Aorta (tissue), 5 donors: ENCODE measurements at regions of chr22 and their contacts with region 1.

Region 1: DNA sequence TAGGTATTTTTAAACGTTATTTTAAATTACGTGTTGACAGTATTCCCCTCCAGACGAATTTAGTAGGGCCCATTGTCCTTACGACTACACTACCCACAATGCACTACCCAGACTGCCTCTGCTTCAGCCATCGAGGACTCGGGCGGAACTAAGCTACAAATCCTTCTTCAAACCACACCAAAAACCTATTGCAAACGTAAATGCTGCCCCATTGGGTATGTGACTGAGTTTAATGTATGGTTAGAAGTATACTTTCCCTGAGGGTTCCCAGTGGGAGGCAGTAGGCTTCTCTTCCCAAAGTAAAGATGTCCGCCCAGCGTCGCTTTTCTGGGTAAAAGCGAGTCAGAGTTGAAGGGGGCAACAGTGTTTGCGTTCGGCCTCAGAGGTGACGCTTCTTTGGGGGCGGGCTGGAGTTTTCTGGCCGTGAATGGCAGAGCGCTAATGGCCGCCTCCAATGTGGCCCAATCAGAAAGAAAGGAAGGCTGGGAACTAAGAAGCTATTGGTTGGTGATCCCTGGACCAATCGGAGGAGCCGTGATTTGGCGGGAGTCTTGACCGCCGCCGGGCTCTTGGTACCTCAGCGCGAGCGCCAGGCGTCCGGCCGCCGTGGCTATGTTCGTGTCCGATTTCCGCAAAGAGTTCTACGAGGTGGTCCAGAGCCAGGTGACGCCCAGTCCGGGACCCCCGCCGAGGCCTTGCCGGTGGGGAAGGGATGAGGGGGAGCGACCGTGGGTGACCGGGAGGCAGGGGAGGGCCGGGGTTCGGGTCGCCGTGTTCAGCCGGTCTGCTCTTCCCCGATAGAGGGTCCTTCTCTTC is at the start of gene CDC45:
- DNase-seq: peak; percentile 97 to 98
- ATAC-seq: peak; percentile 98
- H3K4me3 ChIP-seq: peak within 1 kb of the TSS; percentile 47 to 71
- H3K27ac ChIP-seq: peak within 1 kb of the TSS; percentile 91 to 99
- H3K4me1 ChIP-seq: no peaks in the 10 kb centered on the region
- H3K27me3 ChIP-seq: no peaks in the 10 kb centered on the region
- total RNA-seq, gene CDC45: 0.68 to 1.0 TPM

Region 2: DNA sequence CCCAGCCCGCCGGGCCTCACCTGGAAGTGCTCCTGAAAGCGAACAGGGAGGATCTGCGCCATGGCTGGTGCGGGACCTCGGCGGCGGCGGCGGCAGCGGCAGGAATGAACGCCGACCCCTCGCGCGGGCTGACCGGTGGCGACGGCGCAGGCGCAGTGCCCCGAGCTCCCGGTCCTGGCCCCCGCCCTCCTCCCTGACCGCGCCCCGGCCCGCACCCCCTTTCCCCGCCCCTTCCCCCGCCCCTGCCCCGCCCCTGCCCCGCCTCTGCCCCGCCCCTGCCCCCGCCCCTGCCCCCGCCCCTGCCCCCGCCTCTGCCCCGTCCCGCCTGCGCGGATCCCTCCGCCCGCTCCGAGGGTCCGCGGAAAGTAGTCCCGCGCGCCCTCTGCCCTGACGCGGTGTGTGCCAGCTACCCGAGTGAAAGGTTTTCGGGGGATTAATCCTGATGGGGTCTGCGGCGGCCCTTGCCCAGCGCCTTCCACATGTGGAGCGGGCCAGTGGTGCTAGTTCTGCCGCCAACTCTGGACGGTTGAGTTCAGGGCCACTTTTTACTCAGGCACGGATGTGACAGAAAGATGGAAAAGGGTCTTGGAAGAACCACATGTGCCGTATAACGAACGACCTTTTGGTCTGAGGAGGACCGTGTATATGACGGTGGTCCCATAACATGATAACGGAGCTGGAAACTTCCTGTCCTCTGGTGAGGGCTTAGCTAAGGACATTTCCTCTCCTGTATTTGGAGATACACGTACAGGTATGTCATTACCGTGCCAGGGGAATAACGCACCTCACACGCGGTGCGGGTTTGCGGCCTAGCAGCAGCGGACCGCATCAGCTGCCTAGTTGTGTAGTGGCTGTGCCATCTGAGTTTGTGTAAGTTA is 187.7 kb before region 1 on chr22 and contains the start of gene CLTCL1:
- intact Hi-C with region 1: loop called in 1 of 2 experiments (anchors 10 kb)
- DNase-seq: peak; percentile 85 to 94
- ATAC-seq: peak; percentile 89
- H3K4me3 ChIP-seq: peak within 1 kb of the TSS; percentile 80 to 97
- H3K27ac ChIP-seq: peak within 1 kb of the TSS in 1 of 2 donors; percentile 23
- H3K4me1 ChIP-seq: no peaks in the 10 kb centered on the region
- H3K27me3 ChIP-seq: no peaks in the 10 kb centered on the region
- total RNA-seq, gene CLTCL1: 7.9 to 8.1 TPM

Region 3: DNA sequence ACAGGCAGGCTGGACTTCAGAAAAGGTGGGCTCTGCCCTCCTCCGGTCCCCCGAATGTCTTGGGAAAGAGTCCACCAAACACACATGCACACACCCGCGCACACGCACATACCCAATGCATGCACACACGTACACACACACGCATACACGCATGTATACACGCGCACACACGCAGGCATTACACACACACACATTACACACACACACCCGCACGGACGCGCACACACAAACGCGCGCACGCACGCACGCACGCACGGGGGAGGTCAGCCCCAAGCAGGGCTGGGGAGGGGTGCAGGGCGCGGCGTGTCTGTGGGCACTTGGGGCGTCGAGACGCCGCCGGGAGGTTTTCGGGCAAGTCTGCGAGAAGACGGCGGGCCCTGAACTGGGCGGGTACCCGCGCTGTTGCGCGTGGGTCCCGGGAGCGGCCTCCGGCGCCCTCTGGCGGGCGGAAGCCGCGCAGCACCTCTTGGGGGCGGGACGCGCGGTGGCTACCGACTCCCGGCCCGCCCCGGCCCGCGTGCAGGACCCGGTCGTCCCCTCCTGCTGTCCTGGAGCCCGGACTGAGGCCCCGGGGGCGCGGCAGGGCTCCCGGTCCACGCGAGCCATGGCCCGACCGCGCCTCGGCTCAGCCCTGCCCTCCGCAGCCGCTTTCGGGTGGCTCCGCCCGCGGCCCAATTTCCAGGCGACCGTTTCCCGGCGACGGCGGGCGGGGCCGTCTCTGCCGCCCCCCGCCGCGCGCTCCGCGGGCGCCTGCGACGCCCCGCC is 238.3 kb after region 1 on chr22:
- intact Hi-C with region 1: loop called in 1 of 2 experiments (anchors 10 kb)
- DNase-seq: peak; percentile 85 to 95
- ATAC-seq: peak; percentile 89
- H3K4me3 ChIP-seq: peak overlapping the region; percentile 45 to 55
- H3K27ac ChIP-seq: no peak overlapping the region
- H3K4me1 ChIP-seq: no peaks in the 10 kb centered on the region
- H3K27me3 ChIP-seq: no peaks in the 10 kb centered on the region